Panc1 (cell line): ENCODE measurements at regions of chr7 and their contacts with region 1.

Region 1: GRCh38 chr7:44240983-44241510 is 40.3 kb downstream of the YKT6 start:
- DNase-seq: peak; percentile 64
- ATAC-seq: peak; percentile 96
- H3K4me3 ChIP-seq: peak overlapping the region; percentile 13 to 57; a peak in 2 of 4 replicates
- H3K27ac ChIP-seq: no peak overlapping the region
- H3K4me1 ChIP-seq: 0 out of 2 replicates have a peak, but pooled peaks cover 3% of the 10 kb centered on the region
- H3K27me3 ChIP-seq: no peaks in the 10 kb centered on the region
- CTCF ChIP-seq: peak; percentile 97

Region 2: GRCh38 chr7:42993038-42993437 is 1248.0 kb before region 1 on chr7:
- CTCF ChIA-PET with region 1: no interaction called
- POLR2A ChIA-PET with region 1: no interaction called
- in situ Hi-C with region 1: no loop called
- intact Hi-C with region 1: no loop called
- DNase-seq: no peak
- ATAC-seq: no peak
- H3K4me3 ChIP-seq: no peak overlapping the region
- H3K27ac ChIP-seq: no peak overlapping the region
- H3K4me1 ChIP-seq: no peaks in the 10 kb centered on the region
- H3K27me3 ChIP-seq: no peaks in the 10 kb centered on the region
- CTCF ChIP-seq: no peak

Region 3: DNA sequence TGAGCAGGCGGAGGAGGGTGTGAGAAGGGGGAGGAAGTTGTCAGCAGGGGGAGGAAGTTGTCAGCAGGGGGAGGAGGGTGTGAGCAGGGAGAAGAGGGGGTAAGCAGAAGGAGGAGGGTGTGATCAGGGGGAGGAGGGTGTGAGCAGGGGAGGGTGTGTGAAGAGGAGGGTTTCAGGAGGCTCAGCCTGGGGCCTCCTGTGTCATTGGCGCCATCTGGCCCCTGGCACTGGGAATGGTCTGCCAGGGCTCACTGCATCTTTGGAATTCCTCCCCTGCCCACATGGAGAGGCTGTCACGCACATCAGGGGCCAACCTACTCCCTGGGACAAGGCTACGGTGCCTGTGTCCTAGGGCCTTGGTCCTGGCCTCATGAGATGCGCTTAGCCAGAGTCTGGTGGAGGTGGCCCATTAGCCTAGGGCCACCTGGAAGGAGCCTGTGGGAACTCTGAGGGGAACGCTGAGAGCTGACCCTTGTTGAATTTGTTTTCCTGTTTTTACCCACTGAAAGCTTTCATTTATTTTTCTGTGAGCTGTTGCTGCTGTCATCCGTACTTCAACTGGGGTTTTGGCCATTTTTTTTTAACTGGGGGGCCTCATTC is 66.4 kb after region 1 on chr7:
- CTCF ChIA-PET with region 1: interaction called, 3 read pairs
- POLR2A ChIA-PET with region 1: no interaction called
- in situ Hi-C with region 1: no loop called
- intact Hi-C with region 1: loop called (anchors 5 kb)
- DNase-seq: peak; percentile 18
- ATAC-seq: peak; percentile 88
- H3K4me3 ChIP-seq: no peak overlapping the region
- H3K27ac ChIP-seq: no peak overlapping the region
- H3K4me1 ChIP-seq: no peaks in the 10 kb centered on the region
- H3K27me3 ChIP-seq: no peaks in the 10 kb centered on the region; the same call in 1 of the 2 replicates
- CTCF ChIP-seq: peak; percentile 75; the same call in 1 of the 2 replicates

Region 4: GRCh38 chr7:44431091-44431608 is 190.1 kb after region 1 on chr7:
- CTCF ChIA-PET with region 1: interaction called, 13 read pairs
- POLR2A ChIA-PET with region 1: no interaction called
- in situ Hi-C with region 1: no loop called
- intact Hi-C with region 1: no loop called
- DNase-seq: no peak
- ATAC-seq: peak; percentile 79
- H3K4me3 ChIP-seq: no peak overlapping the region
- H3K27ac ChIP-seq: no peak overlapping the region
- H3K4me1 ChIP-seq: no peaks in the 10 kb centered on the region
- H3K27me3 ChIP-seq: no peaks in the 10 kb centered on the region
- CTCF ChIP-seq: peak; percentile 54; the same call in 1 of the 2 replicates

Region 5: DNA sequence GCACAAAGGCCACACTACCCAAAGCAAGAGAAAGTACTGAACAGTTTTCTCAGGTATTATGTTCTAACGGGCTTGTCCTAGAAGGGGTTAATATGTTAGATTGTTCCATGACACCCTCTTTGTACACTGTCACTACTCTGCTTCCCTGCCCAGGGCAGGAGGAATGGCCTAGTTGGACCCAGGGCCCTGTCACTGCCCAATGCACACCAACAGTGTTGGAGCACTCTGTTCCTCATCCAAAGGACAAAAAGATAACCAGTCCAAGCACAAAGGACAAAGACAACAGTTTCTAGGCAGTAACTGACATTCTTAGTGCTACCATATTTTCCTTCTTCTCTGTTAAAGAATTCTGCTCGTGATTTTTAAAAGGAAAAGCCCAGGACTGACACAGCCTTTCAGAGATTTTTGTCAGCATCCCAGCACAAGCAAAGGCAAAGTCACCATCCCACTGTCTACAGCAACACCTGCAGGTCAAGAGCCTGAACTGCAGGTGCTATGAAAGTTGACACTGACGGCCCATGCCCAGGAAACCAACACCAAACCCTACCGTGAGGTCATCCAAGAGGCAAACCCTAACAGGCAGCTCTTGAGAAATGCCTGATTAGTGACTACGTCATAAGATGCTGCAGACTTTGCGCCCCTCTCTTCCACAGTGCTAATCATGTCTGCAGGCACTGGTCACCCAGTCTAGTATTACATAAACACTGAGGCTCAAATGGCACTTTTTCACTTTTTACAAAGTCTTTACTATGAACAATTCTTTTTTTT is 236.2 kb after region 1 on chr7:
- CTCF ChIA-PET with region 1: no interaction called
- POLR2A ChIA-PET with region 1: no interaction called
- in situ Hi-C with region 1: no loop called
- intact Hi-C with region 1: loop called (anchors 1 kb)
- DNase-seq: peak; percentile 71
- ATAC-seq: peak; percentile 93
- H3K4me3 ChIP-seq: no peak overlapping the region
- H3K27ac ChIP-seq: no peak overlapping the region
- H3K4me1 ChIP-seq: peaks cover 10% of the 10 kb centered on the region
- H3K27me3 ChIP-seq: no peaks in the 10 kb centered on the region
- CTCF ChIP-seq: peak; percentile 93

Region 6: DNA sequence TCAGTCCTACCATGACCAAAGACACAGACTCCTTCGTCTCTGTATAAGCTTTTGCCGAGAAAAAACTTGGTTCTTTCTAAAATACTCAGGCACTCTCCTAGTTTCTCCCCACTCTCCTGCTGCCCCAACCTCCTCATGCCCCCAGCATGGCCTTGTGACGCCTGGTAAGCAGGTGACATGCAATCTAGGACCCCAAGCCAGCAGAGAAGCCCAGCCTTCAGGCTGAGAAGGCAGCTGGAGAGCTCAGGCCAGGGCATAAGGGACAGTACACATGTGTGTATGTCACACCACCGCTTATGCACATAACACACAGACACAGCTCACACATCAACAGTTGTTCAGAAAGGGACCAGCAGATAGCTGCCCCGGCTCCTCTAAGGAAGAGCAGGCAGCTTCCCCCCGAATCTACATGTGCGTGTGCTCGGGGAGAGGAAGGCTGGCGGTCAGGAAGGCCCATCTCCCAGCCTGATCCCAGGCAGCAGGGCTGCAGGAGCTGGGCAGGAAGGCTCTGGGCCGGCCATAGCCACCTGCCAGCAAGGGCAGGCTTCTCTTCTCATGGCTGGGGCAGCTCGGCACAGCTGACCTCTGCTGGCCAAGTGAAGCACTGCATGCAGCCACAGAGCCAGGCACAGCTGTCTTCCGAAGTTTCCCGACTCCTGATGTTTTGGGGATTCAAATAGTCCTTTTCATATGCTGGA is 324.2 kb after region 1 on chr7:
- CTCF ChIA-PET with region 1: interaction called, 6 read pairs
- POLR2A ChIA-PET with region 1: no interaction called
- in situ Hi-C with region 1: no loop called
- intact Hi-C with region 1: loop called (anchors 10 kb)
- DNase-seq: peak; percentile 48
- ATAC-seq: peak; percentile 76
- H3K4me3 ChIP-seq: no peak overlapping the region
- H3K27ac ChIP-seq: no peak overlapping the region
- H3K4me1 ChIP-seq: peaks cover 6% of the 10 kb centered on the region; the same call in 1 of the 2 replicates
- H3K27me3 ChIP-seq: no peaks in the 10 kb centered on the region
- CTCF ChIP-seq: peak; percentile 99